Esophagus muscularis mucosa (tissue), 4 donors: ENCODE measurements at regions of chr11 and their contacts with region 1.

Region 1: DNA sequence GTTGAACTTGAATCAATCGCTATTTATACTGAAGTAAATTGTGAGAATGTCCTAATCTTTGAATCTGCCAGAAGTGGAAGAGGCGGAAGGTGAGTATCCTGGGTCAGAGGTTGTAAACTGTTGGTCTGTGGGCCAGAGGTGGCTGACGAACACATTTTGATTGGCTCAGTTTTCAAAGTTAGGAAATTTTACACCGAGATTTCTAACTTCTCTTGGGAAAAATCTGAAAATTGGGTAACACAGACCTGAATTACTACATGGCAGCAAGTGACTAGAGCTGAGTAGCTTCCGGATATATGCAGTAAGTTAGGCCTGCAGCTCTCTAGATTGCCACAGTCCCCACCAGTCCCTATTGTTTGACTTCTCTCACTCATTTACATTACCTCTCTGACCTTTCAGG is 56.8 kb upstream of the ALKBH3 start:
- DNase-seq: no peak
- H3K4me3 ChIP-seq: no peak overlapping the region
- H3K27ac ChIP-seq: no peak overlapping the region
- H3K4me1 ChIP-seq: no peaks in the 10 kb centered on the region
- H3K27me3 ChIP-seq: no peaks in the 10 kb centered on the region
- CTCF ChIP-seq: no peak
- EP300 ChIP-seq: no peak
- POLR2A ChIP-seq: no peak

Region 2: GRCh38 chr11:43852057-43852636 is 28.3 kb after region 1 on chr11:
- intact Hi-C with region 1: loop called (anchors 1 kb)
- DNase-seq: no peak
- H3K4me3 ChIP-seq: no peak overlapping the region
- H3K27ac ChIP-seq: no peak overlapping the region
- H3K4me1 ChIP-seq: no peaks in the 10 kb centered on the region
- H3K27me3 ChIP-seq: no peaks in the 10 kb centered on the region
- CTCF ChIP-seq: peak; percentile 78 to 87 (median 82)
- EP300 ChIP-seq: no peak
- POLR2A ChIP-seq: no peak

Region 3: DNA sequence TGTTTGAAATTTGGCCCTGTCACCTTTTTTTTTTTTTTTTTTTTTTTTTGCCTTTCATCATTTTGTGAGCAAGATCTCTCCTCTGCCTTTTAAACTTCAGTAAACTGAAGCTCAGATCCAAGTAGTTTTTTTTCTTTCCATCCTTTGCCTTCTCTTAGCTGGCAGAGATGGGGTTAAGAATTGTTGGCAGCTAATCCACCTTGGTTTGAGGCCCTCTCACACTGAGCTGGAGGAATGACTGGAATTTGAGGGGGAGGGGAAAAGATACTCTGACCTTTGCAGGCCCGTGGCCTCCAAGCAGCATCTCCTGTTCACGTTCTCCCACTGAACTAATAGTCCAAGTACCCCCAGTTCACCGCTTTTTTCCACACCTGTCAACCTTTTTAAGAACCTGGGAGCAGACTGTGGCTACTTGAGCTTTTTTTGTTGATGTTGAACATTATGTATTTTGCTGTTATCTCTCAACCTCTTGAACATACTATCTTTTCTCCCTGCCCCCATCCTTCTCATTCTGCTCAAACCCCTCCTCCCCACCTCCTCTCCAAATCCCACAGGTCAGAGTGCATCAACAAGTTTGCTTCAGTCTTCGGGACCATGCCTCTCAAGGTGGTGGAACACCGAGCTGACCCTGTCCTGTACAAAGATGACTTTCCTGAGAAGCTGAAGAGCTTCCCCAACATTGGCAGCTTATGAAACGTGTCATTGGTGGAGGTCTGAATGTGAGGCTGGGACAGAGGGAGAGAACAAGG is 419.9 kb after region 1 on chr11:
- intact Hi-C with region 1: no loop called
- DNase-seq: no peak
- H3K4me3 ChIP-seq: no peak overlapping the region
- H3K27ac ChIP-seq: no peak overlapping the region
- H3K4me1 ChIP-seq: peaks cover 14 to 25% (median 19%) of the 10 kb centered on the region in 4 donors
- H3K27me3 ChIP-seq: no peaks in the 10 kb centered on the region
- CTCF ChIP-seq: no peak
- EP300 ChIP-seq: no peak
- POLR2A ChIP-seq: no peak